Activated T-helper 1 cell treated with anti-CD3 and anti-CD28 coated beads, Interleukin-12 subunit alpha, Interleukin-12 subunit beta, Interleukin-2, Interleukin-4 antibody, amounts not matched to agents 30 ng/mL and 10 ng/mL and 1 ng/mL, durations not matched to agents 14 hours and 24 hours and 36 hours (primary cell): ENCODE measurements at regions of chr3 and their contacts with region 1.

Region 1: DNA sequence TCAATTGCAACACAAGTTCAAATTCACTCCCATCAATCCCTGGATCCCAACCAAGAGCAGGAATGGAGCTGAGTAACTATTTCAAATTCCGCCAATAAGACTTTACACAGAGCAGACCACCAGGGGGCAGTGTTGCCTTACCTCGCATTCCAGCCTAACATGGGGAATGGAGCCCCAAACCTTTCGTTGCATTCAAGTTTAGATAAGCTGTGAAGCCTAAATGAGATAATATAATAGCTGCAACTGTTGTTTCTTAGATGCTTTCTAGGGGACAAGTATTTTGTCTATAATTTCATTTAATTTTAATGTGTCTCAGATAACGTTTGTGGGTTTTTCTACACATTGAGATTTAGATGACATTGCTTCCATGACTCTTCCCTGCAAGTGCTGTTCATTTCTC is 186.7 kb downstream of the NSUN3 start:
- DNase-seq: peak; percentile 38
- H3K4me3 Mint-ChIP-seq: no peak overlapping the region
- H3K27ac Mint-ChIP-seq: no peak overlapping the region
- H3K4me1 Mint-ChIP-seq: no peaks in the 10 kb centered on the region
- H3K27me3 Mint-ChIP-seq: peaks cover 5% of the 10 kb centered on the region

Region 2: DNA sequence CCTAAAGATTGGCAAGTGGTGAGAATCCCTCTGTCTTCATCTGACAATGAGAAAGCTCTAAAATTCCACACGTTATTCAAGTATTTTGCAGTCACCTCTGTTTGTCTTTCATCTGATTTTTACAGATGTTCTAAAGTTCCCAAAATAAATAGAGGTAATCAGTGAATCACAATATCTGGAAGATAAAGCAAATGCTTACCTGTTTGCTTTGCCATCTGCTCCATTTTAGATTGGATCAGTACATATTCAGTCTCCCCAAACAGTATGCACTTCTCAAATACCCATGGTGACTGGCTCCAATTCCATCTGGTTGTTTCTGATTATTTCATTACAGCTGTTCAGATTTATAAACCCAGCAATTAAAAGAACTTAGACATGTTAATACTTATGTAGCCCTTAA is 83.8 kb after region 1 on chr3:
- intact Hi-C with region 1: no loop called
- DNase-seq: no peak
- H3K4me3 Mint-ChIP-seq: no peak overlapping the region
- H3K27ac Mint-ChIP-seq: no peak overlapping the region
- H3K4me1 Mint-ChIP-seq: no peaks in the 10 kb centered on the region
- H3K27me3 Mint-ChIP-seq: no peaks in the 10 kb centered on the region

Region 3: GRCh38 chr3:95615592-95616310 is 1366.2 kb after region 1 on chr3:
- intact Hi-C with region 1: no loop called
- DNase-seq: no peak
- H3K4me3 Mint-ChIP-seq: no peak overlapping the region
- H3K27ac Mint-ChIP-seq: no peak overlapping the region
- H3K4me1 Mint-ChIP-seq: no peaks in the 10 kb centered on the region
- H3K27me3 Mint-ChIP-seq: no peaks in the 10 kb centered on the region

Region 4: GRCh38 chr3:95883801-95884200 is 1634.2 kb after region 1 on chr3:
- intact Hi-C with region 1: loop called (anchors 10 kb)
- DNase-seq: no peak
- H3K4me3 Mint-ChIP-seq: no peak overlapping the region
- H3K27ac Mint-ChIP-seq: no peak overlapping the region
- H3K4me1 Mint-ChIP-seq: no peaks in the 10 kb centered on the region
- H3K27me3 Mint-ChIP-seq: no peaks in the 10 kb centered on the region